Activated naive CD4-positive, alpha-beta T cell treated with anti-CD3 and anti-CD28 coated beads for 36 hours (primary cell): ENCODE measurements at regions of chr2 and their contacts with region 1.

Region 1: DNA sequence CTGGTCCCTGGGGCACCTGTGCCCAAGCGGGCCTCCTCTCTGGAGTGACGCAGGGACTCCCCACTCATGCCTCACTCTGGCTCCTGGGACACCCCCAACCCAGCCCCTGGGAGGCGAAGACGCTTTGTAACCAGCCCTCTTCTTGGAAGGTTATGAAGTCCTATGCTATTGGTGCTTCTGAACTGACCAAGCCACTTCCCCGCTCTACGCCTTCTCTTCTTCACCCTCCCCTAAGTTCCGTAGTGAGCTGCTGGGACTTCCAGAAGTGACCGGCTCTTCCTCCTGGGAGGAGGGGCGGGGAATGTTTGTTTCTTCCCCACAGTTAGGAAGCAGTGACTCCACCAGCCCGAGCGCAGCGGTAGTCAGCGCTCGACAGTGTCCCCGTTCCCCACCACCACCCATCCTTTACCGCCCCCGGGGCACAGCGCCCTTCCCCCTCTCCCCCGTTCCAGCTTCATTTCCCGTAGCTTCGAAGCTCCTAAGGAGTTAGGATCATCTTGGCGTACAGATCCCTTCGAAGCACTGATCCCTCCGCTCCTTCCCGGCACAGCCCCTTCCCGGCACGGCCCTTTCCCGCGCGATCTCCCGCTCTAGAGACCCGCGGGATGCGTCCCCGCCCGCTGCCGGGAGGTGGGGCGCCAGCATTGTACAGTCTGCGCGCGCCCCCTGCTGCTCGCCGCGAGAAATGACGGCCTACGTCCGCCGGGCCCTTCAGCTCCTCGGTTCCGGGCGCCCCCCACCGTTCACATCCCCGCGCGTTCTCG is 25.3 kb upstream of the NOTO start:
- DNase-seq: peak; percentile 92
- H3K4me3 Mint-ChIP-seq: peak overlapping the region; percentile 78
- H3K27ac Mint-ChIP-seq: peak overlapping the region; percentile 65
- H3K4me1 Mint-ChIP-seq: peaks cover 24% of the 10 kb centered on the region
- H3K27me3 Mint-ChIP-seq: peaks cover 26% of the 10 kb centered on the region

Region 2: GRCh38 chr2:72770879-72771461 is 406.1 kb before region 1 on chr2:
- CTCF ChIA-PET with region 1: interaction called, 3 read pairs
- intact Hi-C with region 1: loop called (anchors 2 kb)
- DNase-seq: peak; percentile 78
- H3K4me3 Mint-ChIP-seq: no peak overlapping the region
- H3K27ac Mint-ChIP-seq: no peak overlapping the region
- H3K4me1 Mint-ChIP-seq: no peaks in the 10 kb centered on the region
- H3K27me3 Mint-ChIP-seq: no peaks in the 10 kb centered on the region

Region 3: DNA sequence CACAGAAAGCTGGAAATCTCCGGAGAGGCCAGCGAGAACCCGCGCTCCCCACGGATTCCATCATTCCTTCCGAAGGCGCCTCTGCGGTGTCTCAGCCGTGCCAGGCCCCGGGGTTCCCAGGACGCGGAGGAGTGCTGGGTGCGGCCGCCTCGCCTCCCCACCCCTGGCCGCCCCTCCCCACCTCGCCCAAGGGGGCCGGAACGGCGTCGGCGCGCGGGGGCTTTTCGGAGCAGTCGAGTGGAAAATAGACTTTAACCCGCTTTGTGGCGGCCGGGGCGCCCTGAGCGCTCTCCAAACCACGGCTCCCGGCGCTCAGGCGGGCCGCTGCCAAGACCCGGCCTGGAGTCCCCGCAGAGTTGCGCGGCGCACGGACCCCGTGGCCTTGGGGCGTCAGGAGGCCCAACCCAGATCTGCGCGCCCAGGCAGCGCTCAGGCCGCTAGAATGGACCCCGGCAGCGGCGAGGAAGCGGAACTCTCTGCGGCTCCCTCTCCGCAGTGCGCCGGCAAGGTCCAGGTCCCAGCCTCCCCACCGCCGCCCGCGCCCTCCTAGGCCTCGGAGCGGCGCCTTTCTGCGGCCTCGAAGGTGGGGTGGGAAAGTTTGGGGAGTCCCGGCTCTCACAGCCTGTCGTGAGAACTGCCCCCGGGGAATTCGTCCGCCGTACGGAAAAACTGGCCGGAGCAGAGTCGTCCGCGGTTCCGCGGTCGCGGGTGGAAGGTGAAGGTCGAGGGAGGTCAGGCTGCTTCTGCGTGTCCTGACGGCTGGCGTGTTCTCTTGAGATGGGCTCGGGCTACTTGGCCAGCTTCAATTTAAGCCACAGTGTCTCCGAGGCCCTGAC is 260.9 kb before region 1 on chr2:
- CTCF ChIA-PET with region 1: interaction called, 3 read pairs
- intact Hi-C with region 1: loop called (anchors 2 kb)
- DNase-seq: peak; percentile 53
- H3K4me3 Mint-ChIP-seq: peak overlapping the region; percentile 71
- H3K27ac Mint-ChIP-seq: no peak overlapping the region
- H3K4me1 Mint-ChIP-seq: peaks cover 30% of the 10 kb centered on the region
- H3K27me3 Mint-ChIP-seq: peaks cover 70% of the 10 kb centered on the region

Region 4: DNA sequence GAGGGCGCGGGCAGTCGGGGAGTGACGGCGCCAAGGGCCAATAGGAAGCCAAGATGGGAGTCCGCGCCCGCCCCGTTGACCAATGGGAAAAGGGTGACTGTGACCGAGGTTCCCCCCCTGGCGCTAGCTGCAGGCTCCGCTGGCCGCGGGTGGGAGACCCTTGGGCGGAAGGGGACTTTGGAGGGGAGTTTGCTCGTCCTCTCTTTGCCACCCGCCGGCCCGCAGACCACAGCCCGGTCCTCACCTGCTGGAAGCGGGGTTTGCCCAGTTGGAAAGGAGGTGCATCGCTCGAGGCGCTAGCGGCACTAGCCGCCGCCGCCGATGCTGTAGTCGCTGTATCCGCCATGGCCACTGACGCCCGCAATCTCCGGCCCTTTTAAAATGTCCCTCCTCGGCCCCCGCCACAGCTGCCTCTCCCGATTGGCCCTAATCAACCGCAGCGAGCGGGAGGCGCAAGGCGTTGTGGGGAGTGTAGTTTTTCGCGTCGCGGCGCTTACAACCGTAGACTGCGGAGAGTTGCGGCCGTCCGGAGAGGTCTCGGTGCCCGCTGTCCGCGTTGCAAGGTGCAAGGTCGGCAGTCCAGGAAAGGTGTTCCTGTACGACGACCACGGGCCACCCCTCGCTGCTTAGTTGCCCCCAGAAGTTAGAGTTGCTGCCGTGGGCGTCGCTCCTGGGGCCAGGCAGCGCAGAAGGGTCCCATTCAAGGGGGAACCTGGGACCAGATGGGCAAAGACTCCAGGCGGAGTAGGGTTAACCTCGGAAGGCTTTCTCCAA is 105.5 kb before region 1 on chr2 and contains the start of gene SFXN5:
- CTCF ChIA-PET with region 1: interaction called, 8 read pairs
- intact Hi-C with region 1: loop called (anchors 1 kb)
- DNase-seq: peak; percentile 96
- H3K4me3 Mint-ChIP-seq: peak within 1 kb of the TSS; percentile 88
- H3K27ac Mint-ChIP-seq: peak within 1 kb of the TSS; percentile 87
- H3K4me1 Mint-ChIP-seq: peaks cover 20% of the 10 kb centered on the region
- H3K27me3 Mint-ChIP-seq: no peaks in the 10 kb centered on the region
- total RNA-seq, gene SFXN5: 5.3 to 6.8 TPM

Region 5: GRCh38 chr2:73156539-73157124 is 20.4 kb before region 1 on chr2:
- CTCF ChIA-PET with region 1: interaction called, 17 read pairs
- intact Hi-C with region 1: no loop called
- DNase-seq: peak; percentile 62
- H3K4me3 Mint-ChIP-seq: no peak overlapping the region
- H3K27ac Mint-ChIP-seq: no peak overlapping the region
- H3K4me1 Mint-ChIP-seq: no peaks in the 10 kb centered on the region
- H3K27me3 Mint-ChIP-seq: peaks cover 30% of the 10 kb centered on the region

Region 6: DNA sequence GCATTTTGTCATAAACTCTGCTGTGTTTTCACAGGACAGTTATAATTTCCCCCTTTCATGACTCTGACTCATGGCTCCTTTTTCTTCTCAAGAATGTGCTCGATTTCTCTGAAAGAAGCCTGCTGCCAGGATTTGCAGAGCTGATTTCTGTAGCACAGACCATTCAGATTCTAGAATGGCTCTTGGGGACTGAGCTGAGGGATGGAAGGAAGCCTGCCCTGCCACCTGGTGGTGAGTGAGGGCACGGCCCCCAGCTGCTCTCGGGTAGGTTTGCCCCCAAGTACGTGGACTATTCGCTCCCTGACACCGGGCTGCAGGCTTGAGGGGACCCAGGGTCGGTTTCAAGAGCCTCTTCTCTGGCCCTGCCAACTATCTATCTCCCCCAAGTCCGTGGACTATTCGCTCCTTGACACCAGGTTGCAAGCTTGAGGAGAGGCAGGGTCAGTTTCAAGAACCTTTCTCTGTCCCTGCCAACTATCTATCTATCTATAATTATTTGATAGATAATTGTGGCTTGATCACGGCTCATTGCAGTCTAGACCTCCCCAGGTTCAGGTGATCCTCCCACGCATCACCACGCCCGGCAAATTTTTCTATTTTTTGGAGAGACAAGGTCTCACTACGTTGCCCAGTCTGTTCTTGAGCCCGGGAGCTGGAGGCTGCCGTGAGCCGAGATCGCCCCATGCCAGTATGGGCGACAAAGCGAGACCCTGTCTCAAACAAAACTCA is 35.5 kb after region 1 on chr2:
- CTCF ChIA-PET with region 1: interaction called, 81 read pairs
- intact Hi-C with region 1: loop called (anchors 1 kb)
- DNase-seq: peak; percentile 85
- H3K4me3 Mint-ChIP-seq: no peak overlapping the region
- H3K27ac Mint-ChIP-seq: no peak overlapping the region
- H3K4me1 Mint-ChIP-seq: peaks cover 29% of the 10 kb centered on the region
- H3K27me3 Mint-ChIP-seq: peaks cover 3% of the 10 kb centered on the region

Region 7: DNA sequence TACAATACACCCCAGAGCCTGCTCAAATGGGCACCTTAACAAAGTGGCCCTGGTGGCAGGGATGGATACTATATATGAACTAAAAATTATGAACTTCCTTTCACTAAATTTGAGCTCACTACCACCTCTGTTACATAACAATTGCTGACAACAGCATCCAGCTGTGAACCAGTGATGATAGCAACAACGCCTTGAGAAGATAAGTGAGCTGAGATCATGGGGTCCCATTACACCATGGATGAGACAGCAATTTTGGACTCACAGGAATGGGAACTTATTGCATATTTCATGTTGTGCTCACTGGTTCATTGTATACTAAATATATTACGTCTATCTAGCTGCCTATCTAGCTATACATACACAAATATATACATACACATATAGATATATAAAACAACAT is 191.7 kb after region 1 on chr2:
- CTCF ChIA-PET with region 1: no interaction called
- intact Hi-C with region 1: no loop called
- DNase-seq: no peak
- H3K4me3 Mint-ChIP-seq: no peak overlapping the region
- H3K27ac Mint-ChIP-seq: no peak overlapping the region
- H3K4me1 Mint-ChIP-seq: no peaks in the 10 kb centered on the region
- H3K27me3 Mint-ChIP-seq: peaks cover 4% of the 10 kb centered on the region